A549 (cell line): ENCODE measurements at regions of chr17 and their contacts with region 1.

Region 1: GRCh38 chr17:72705905-72706395 is 386.5 kb downstream of the SLC39A11 start:
- DNase-seq: no peak
- ATAC-seq: 0 out of 6 replicates have a peak, but pooled peaks of 1 of the 2 experiments have one; percentile 3
- H3K4me3 ChIP-seq: no peak overlapping the region
- H3K27ac ChIP-seq: peak overlapping the region; percentile 83 to 85
- H3K4me1 ChIP-seq: peaks cover 45% of the 10 kb centered on the region
- CTCF ChIP-seq: no peak
- EP300 ChIP-seq: no peak
- POLR2A ChIP-seq: no peak
- RAD21 ChIP-seq: no peak

Region 2: DNA sequence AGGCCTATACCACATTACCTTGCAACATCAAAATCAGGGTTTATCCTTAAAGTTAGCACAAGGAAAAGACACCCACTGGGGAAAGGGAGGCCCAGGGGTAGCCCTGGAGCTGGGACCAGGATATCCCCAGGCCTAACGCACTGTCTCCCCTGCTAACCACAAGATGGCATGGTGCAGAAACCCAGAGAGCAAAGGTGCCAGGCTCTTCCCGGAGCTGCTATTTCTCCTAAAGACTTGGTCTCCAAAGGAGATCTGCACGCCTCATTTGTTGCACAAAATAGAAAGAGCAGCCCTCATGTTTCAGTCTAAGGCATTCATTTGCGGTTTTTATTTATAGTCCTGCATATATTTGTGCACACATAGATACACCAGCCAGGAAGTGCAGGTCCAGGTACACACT is 176.6 kb before region 1 on chr17:
- CTCF ChIA-PET with region 1: no interaction called
- POLR2A ChIA-PET with region 1: no interaction called
- DNase-seq: no peak
- ATAC-seq: peak; percentile 41 to 56; a peak in 4 of 6 replicates
- H3K4me3 ChIP-seq: no peak overlapping the region
- H3K27ac ChIP-seq: peak overlapping the region in 1 of 2 experiments; percentile 19; a peak in 1 of 6 replicates
- H3K4me1 ChIP-seq: peaks cover 44% of the 10 kb centered on the region
- CTCF ChIP-seq: no peak; the same call in 2 of the 3 replicates
- EP300 ChIP-seq: no peak
- POLR2A ChIP-seq: no peak
- RAD21 ChIP-seq: 0 out of 5 replicates have a peak, but pooled peaks of 1 of the 2 experiments have one; percentile 5

Region 3: GRCh38 chr17:72715906-72716572 is 10.1 kb after region 1 on chr17:
- CTCF ChIA-PET with region 1: interaction called, 5 read pairs
- POLR2A ChIA-PET with region 1: interaction called, 10 read pairs
- DNase-seq: peak; percentile 93 to 97
- ATAC-seq: peak; percentile 86 to 89
- H3K4me3 ChIP-seq: no peak overlapping the region
- H3K27ac ChIP-seq: peak overlapping the region; percentile 84 to 85
- H3K4me1 ChIP-seq: peaks cover 41% of the 10 kb centered on the region
- CTCF ChIP-seq: no peak
- EP300 ChIP-seq: peak; percentile 97 to 98
- POLR2A ChIP-seq: no peak
- RAD21 ChIP-seq: peak; percentile 52 to 70; a peak in 4 of 5 replicates